Gastrocnemius medialis (tissue), 4 donors: ENCODE measurements at regions of chr2 and their contacts with region 1.

Region 1: DNA sequence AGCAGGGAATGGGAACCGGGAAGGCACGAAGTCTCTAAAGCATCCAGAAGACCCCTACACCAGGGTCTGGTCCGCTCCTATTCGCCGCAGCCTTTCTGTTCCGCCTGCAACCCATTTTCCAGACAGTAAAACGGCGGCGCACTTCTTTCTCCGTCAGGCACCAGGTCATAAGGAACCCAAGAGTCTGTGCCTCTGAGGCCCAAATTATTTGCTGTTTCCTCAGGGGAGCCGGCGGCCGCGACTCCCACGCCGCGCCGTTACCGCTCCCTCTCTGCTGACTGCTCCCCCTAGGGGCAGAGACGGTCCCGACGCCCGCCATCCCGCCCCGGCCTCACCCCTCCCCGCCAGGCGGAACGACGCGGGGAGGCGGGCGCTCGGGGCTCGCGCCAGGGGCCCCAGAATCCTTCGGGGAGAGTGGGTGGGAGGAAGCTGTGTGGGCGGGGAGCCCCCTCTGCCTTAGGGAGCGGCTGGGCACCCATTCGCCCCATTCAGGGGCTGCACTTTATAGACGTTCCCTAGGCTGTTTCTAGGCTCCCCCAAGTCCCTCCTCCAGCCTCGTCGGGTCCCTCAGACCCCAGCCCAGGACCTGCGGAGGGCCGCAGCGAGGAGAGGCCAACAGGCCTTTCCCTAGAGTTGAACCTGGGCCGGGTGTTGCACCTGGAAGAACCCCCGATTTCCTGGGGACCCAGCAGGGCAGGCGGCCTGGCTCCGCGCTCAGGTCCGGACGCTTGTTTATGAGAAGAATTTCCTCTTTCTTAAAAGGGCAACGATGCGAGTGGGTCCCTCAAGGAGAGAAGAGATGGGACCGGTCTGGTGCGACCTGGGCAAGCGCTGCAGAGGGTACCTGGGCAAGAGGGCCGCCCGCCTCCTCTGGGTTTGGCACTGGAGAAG is 3.6 kb upstream of the CTDSP1 start:
- DNase-seq: peak; percentile 81 to 91
- ATAC-seq: peak; percentile 57 to 59
- H3K4me3 ChIP-seq: peak overlapping the region; percentile 87 to 99 (median 93)
- H3K27ac ChIP-seq: peak overlapping the region; percentile 97 to 100 (median 98)
- H3K4me1 ChIP-seq: peaks cover 16 to 29% of the 10 kb centered on the region in 2 donors
- H3K27me3 ChIP-seq: no peaks in the 10 kb centered on the region
- CTCF ChIP-seq: peak; percentile 92 to 99 (median 95)
- POLR2A ChIP-seq: peak; percentile 30 to 44

Region 2: DNA sequence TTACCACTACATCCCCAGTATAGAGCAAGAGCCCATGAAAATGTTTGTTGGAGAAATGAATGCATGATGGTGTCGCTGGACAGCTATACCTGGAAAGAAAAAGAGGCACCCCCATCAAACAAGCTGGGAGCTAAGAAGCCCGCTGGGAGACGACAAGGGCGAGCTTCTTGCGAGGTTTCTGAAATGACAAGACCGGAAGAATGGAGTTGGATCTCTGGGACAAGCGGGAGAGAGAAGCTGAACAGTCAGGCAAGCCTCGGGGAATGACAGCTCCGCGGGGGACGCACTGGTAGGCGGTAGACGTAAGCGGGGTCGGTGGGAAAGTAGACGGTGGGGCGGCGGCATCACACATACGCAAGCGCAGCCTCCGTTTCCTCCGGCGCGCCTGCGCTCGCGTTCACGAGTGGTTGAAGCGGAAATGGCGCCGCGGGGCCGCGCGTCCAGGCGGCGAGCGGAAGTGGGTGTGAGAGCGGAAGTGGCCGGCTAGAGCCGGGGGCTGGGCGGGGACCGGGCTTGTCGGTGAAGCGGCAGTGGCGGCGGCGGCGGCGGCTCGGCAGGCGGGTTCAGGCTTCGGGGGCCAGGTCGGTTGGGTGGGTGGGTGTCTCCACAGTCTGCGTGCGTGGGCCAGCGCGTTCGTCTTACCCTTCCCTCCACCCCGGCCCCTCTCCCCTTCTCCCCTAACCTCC is 179.2 kb before region 1 on chr2 and contains the start of gene ARPC2:
- in situ Hi-C with region 1: no loop called
- intact Hi-C with region 1: loop called (anchors 2 kb)
- DNase-seq: peak; percentile 86 to 91
- ATAC-seq: peak; percentile 85 to 88
- H3K4me3 ChIP-seq: peak within 1 kb of the TSS; percentile 87 to 99 (median 94)
- H3K27ac ChIP-seq: peak within 1 kb of the TSS; percentile 96 to 99 (median 97)
- H3K4me1 ChIP-seq: peaks cover 38 to 47% of the 10 kb centered on the region in 2 donors
- H3K27me3 ChIP-seq: no peaks in the 10 kb centered on the region
- CTCF ChIP-seq: peak; percentile 9 to 46 (median 42)
- POLR2A ChIP-seq: peak; percentile 92
- total RNA-seq, gene ARPC2: 181 to 231 (median 193) TPM

Region 3: DNA sequence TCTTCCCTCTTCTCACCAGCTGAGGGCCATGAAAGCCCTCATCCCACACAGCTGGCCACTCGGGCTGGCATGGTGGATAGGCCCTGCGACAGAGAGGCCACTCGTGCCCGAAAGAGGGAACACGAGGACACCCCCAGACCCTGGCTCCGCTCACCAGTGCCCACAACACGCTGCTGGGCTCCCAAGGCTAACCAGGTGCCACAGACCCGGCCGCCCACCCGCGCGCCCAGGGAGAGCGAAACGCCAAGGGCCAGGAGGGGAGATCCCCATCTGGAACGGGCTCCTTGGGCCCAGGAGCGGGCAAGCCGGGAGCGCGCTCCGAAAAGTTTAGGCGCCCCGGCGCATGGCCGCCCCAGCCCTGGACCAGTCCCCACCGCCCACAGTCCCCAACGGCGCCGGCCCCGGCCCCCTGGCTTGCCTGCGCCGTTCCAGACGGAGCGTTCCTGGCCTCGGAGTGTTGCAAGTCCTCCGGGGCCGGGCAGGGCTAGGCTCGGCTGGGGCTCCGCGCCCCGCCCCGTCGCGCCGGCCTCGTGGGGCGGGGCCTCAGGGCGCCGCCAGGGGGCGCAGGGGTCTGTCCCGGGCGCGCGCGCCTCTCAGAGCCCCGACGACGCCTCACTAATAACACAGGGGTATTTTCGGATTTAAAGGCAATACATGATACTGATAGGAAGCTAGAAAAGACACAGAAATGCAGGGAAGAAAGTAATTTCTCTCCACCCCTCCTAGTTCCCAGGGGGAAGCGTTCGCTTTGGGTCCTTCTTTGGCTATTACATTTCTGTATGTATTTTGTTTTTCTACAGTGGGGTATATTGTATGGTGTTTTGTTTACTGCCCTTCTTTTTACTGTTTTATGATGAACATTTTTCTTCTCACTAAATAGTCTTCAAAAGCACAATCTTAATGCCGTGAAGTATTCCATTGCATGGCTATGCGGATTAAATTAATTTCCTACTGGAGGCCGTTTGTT is 103.7 kb before region 1 on chr2 and contains the start of gene TMBIM1:
- in situ Hi-C with region 1: no loop called
- intact Hi-C with region 1: loop called (anchors 1 kb)
- DNase-seq: peak; percentile 56 to 78
- ATAC-seq: peak; percentile 74 to 83
- H3K4me3 ChIP-seq: peak within 1 kb of the TSS; percentile 71 to 100 (median 96)
- H3K27ac ChIP-seq: peak within 1 kb of the TSS; percentile 93 to 100 (median 98)
- H3K4me1 ChIP-seq: peaks cover 43 to 48% of the 10 kb centered on the region in 2 donors
- H3K27me3 ChIP-seq: no peaks in the 10 kb centered on the region
- CTCF ChIP-seq: peak; percentile 75 to 100 (median 98)
- POLR2A ChIP-seq: peak; percentile 89 to 95
- total RNA-seq, gene TMBIM1: 142 to 296 (median 215) TPM

Region 4: GRCh38 chr2:218312267-218312756 is 83.7 kb before region 1 on chr2:
- in situ Hi-C with region 1: no loop called
- intact Hi-C with region 1: no loop called
- DNase-seq: no peak
- ATAC-seq: no peak
- H3K4me3 ChIP-seq: no peak overlapping the region
- H3K27ac ChIP-seq: no peak overlapping the region
- H3K4me1 ChIP-seq: no peaks in the 10 kb centered on the region
- H3K27me3 ChIP-seq: no peaks in the 10 kb centered on the region
- CTCF ChIP-seq: no peak
- POLR2A ChIP-seq: no peak

Region 5: DNA sequence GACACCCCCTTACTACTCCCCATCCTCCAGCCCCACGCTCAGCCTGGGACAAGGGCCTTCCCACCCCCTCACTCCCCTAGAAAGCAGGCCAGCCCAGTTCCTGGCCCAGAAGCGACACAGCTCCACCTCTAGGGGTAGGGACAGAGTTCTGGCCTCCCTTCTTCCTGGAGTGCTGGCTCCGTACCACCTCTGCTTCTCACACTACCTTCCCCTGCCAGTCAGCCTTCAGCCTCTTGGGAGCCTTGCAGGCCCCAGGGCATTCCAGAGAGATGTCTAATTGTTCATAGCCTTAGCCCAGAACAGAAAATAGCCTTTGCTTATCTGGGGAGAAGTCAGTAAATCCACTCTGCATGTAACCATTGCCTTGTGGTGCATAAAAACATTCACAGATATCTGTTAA is 52.5 kb before region 1 on chr2:
- in situ Hi-C with region 1: no loop called
- intact Hi-C with region 1: no loop called
- DNase-seq: no peak
- ATAC-seq: no peak
- H3K4me3 ChIP-seq: no peak overlapping the region
- H3K27ac ChIP-seq: no peak overlapping the region
- H3K4me1 ChIP-seq: no peaks in the 10 kb centered on the region
- H3K27me3 ChIP-seq: no peaks in the 10 kb centered on the region
- CTCF ChIP-seq: no peak
- POLR2A ChIP-seq: no peak

Region 6: DNA sequence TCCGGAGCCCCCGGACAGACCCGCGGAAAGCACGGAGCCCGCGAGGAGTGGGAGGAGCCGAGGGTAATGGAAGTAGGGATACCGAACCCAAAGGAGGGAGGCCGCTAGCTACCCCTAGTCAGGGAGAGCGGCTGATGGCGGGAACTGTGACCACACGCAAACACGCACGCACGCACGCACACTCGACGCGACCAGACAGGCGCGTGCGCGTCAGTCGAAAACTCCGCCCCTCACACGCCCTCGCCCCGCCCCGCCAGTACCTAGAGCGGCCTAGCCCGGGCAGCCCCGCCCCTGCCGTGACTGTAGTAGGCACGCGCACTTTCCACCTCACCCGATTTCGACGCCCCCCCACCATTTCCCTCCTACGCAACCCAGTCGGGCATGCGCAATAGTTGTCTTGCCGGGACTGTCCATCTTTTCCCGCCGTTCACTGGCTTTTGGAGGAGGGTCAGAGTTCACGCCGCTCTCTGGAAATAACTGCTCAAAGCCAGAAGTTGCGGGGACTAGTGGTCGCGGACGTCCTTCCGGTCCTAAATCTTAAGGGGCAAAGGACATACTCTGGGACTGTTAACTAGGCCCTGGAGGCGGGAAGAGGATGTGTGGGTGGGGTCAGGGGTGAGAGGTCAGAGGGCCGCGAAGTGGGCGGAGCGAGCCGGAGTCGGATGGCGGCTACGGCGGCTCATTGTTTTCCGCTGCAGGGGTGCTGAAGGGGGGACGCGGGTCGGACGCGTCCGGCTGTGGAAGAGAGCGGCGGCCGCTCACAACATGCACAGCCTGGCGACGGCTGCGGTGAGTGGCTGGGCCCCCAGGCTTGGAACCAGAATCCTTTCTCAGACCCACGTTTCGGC is 172.4 kb after region 1 on chr2 and contains the starts of genes CNOT9 and USP37:
- in situ Hi-C with region 1: no loop called
- intact Hi-C with region 1: loop called (anchors 1 kb)
- DNase-seq: peak; percentile 99
- ATAC-seq: peak; percentile 89 to 95
- H3K4me3 ChIP-seq: peak within 1 kb of the TSS; percentile 77 to 90 (median 78)
- H3K27ac ChIP-seq: peak within 1 kb of the TSS; percentile 94 to 96 (median 96)
- H3K4me1 ChIP-seq: peaks cover 31 to 44% of the 10 kb centered on the region in 2 donors
- H3K27me3 ChIP-seq: no peaks in the 10 kb centered on the region
- CTCF ChIP-seq: no peak
- POLR2A ChIP-seq: peak; percentile 75
- total RNA-seq, gene CNOT9: 10.4 to 28.4 (median 20.5) TPM
- total RNA-seq, gene USP37: 7.0 to 12.4 (median 8.0) TPM

Region 7: DNA sequence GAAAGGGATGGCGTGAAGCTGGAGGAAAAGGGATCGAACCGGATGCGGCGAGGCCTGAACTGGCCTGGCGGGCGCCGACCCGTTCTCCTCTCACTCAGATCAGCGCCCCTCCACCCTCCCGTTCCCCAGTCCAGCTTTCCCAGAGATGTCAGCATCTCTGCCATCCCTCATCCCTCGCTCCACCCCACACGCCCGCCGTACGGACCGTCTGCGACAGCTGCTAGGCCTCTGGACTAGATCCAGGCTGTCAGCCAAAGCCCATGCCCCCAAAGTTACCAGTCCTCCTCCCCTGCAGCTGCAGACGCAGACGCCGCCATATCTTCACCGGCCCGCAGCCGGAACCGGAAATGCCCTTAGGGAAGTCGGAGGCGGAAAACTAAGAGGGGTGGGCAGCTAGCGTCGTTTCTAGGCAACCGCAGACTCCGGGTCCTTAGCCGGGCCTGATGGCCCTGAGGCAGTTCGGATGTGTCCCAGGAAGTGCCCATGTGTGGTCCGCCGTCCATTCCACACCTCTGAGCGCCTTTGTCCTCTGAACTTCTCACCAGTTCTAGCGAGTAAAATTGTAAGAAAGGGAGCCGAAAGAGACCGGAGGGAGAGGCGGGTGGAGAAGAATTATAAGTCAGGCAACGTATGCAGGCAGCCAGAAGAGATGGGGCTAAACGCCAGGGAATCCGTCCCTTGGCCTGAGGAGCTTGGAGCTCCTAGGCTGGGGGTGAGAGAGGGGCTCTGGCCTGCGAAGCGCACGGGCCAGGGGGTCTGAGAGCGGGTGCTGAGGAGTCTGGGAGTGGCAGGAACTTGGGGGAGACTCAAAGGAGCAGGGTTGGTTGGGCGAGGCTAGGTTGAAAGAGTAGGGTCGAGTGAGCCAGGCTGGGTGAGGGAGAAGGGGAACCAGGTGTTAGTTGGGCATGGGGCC is 275.9 kb after region 1 on chr2 and contains the starts of genes RNF25 and STK36:
- in situ Hi-C with region 1: loop called (anchors 25 kb)
- intact Hi-C with region 1: loop called (anchors 5 kb)
- DNase-seq: peak; percentile 70 to 75
- ATAC-seq: peak; percentile 97
- H3K4me3 ChIP-seq: peak within 1 kb of the TSS; percentile 76 to 97 (median 89)
- H3K27ac ChIP-seq: peak within 1 kb of the TSS; percentile 73 to 84 (median 82)
- H3K4me1 ChIP-seq: peaks cover 13% of the 10 kb centered on the region in 2 donors
- H3K27me3 ChIP-seq: no peaks in the 10 kb centered on the region
- CTCF ChIP-seq: no peak
- POLR2A ChIP-seq: peak; percentile 50 to 79
- total RNA-seq, gene RNF25: 11.7 to 39.1 (median 26.1) TPM
- total RNA-seq, gene STK36: 3.0 to 16.3 (median 7.6) TPM